ENCODE measurements at regions of chr19 and their contacts with region 1.

Region 1: GRCh38 chr19:55643348-55644176 is at the start of gene ZNF581:
- DNase-seq: peak; percentile 86
- ATAC-seq: peak; percentile 46
- H3K4me3 Mint-ChIP-seq: peak within 1 kb of the TSS; percentile 97
- H3K27ac Mint-ChIP-seq: peak within 1 kb of the TSS; percentile 99
- H3K4me1 Mint-ChIP-seq: peaks cover 30% of the 10 kb centered on the region
- H3K27me3 Mint-ChIP-seq: no peaks in the 10 kb centered on the region
- total RNA-seq, gene ZNF581: 28.6 to 31.7 TPM

Region 2: GRCh38 chr19:55653758-55654539 is 10.4 kb after region 1 on chr19:
- POLR2A ChIA-PET with region 1: interaction called, 20 read pairs
- DNase-seq: peak; percentile 97
- ATAC-seq: peak; percentile 81
- H3K4me3 Mint-ChIP-seq: peak overlapping the region; percentile 85
- H3K27ac Mint-ChIP-seq: peak overlapping the region; percentile 94
- H3K4me1 Mint-ChIP-seq: peaks cover 29% of the 10 kb centered on the region
- H3K27me3 Mint-ChIP-seq: no peaks in the 10 kb centered on the region